OCI-LY7 (cell line): ENCODE measurements at regions of chrX and their contacts with region 1.

Region 1: GRCh38 chrX:18654875-18655836 is 16.8 kb downstream of the RS1 start:
- DNase-seq: no peak
- H3K4me3 ChIP-seq: no peak overlapping the region
- H3K27ac ChIP-seq: no peak overlapping the region
- H3K4me1 ChIP-seq: no peaks in the 10 kb centered on the region
- CTCF ChIP-seq: no peak

Region 2: GRCh38 chrX:18617407-18617750 is 37.8 kb before region 1 on chrX:
- CTCF ChIA-PET with region 1: no interaction called
- POLR2A ChIA-PET with region 1: no interaction called
- intact Hi-C with region 1: no loop called
- DNase-seq: no peak
- H3K4me3 ChIP-seq: no peak overlapping the region
- H3K27ac ChIP-seq: no peak overlapping the region
- H3K4me1 ChIP-seq: no peaks in the 10 kb centered on the region
- CTCF ChIP-seq: no peak

Region 3: GRCh38 chrX:18707426-18708049 is 52.4 kb after region 1 on chrX and contains the start of gene PPEF1:
- CTCF ChIA-PET with region 1: interaction called, 35 read pairs
- POLR2A ChIA-PET with region 1: no interaction called
- intact Hi-C with region 1: no loop called
- DNase-seq: no peak
- H3K4me3 ChIP-seq: no peak within 1 kb of the TSS
- H3K27ac ChIP-seq: no peak within 1 kb of the TSS
- H3K4me1 ChIP-seq: no peaks in the 10 kb centered on the region
- CTCF ChIP-seq: no peak
- total RNA-seq, gene PPEF1: not detected in 2 replicates

Region 4: DNA sequence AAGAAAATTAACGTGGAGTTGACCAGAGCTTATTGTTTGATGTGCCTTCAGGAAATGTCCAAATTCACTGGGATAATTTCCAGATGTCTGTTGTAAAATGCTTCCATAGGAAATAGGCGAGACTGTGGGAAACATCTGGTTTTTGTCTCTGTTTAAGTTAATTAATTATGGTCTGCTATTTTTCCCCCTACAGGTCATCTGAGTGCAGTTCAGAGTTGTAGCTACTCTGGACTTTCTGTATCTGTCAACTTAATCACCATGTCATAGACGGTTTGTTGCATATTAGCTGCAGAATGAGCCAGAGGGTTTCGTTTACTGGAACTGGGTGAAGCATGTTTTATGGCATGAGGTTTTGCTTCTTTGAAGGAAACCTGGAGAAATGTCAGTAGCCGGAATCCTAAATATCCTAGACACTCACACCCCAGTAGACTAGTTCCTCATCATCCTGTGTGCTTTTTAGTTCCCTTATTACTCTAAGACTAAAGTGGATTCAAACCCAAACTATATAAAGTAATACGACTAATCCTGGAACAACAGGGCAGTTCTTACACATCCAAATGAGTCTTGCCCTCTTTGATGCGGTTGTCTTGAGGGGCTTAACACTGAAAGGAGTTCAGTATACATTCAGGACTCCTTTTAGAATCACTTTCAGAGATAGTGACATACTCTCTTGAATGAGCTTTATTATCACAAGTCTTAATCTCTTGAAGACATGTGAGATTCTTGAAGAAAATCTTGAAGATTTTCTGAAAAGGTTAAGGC is 114.8 kb after region 1 on chrX:
- CTCF ChIA-PET with region 1: no interaction called
- POLR2A ChIA-PET with region 1: no interaction called
- intact Hi-C with region 1: no loop called
- DNase-seq: no peak
- H3K4me3 ChIP-seq: no peak overlapping the region
- H3K27ac ChIP-seq: no peak overlapping the region
- H3K4me1 ChIP-seq: no peaks in the 10 kb centered on the region
- CTCF ChIP-seq: no peak